Heart right ventricle (tissue), 16 donors: ENCODE measurements at regions of chr3 and their contacts with region 1.

Region 1: GRCh38 chr3:177359593-177360357 is 162.5 kb upstream of the TBL1XR1 start:
- DNase-seq: peak; percentile 96
- ATAC-seq: peak; percentile 89 to 95 (median 93)
- H3K4me3 ChIP-seq: peak overlapping the region in 8 of 10 donors; percentile 14 to 51 (median 46)
- H3K27ac ChIP-seq: peak overlapping the region; percentile 64 to 97 (median 91)
- H3K4me1 ChIP-seq: peaks cover 34 to 77% (median 59%) of the 10 kb centered on the region in 9 donors
- H3K27me3 ChIP-seq: no peaks in the 10 kb centered on the region
- CTCF ChIP-seq: peak in 2 of 9 donors; percentile 19 to 31

Region 2: GRCh38 chr3:177057768-177058167 is 302.0 kb before region 1 on chr3:
- intact Hi-C with region 1: loop called in 7 of 10 experiments (anchors 5 to 10 kb)
- DNase-seq: no peak
- ATAC-seq: no peak
- H3K4me3 ChIP-seq: no peak overlapping the region
- H3K27ac ChIP-seq: no peak overlapping the region
- H3K4me1 ChIP-seq: peaks cover 0 to 70% (median 43%) of the 10 kb centered on the region in 9 donors
- H3K27me3 ChIP-seq: no peaks in the 10 kb centered on the region
- CTCF ChIP-seq: no peak

Region 3: GRCh38 chr3:177345049-177345972 is 14.5 kb before region 1 on chr3:
- intact Hi-C with region 1: loop called in 3 of 10 experiments (anchors 1 to 2 kb)
- DNase-seq: peak; percentile 79 to 90
- ATAC-seq: peak; percentile 93 to 99 (median 98)
- H3K4me3 ChIP-seq: peak overlapping the region in 1 of 10 donors; percentile 5
- H3K27ac ChIP-seq: peak overlapping the region; percentile 86 to 96 (median 90)
- H3K4me1 ChIP-seq: peaks cover 14 to 70% (median 55%) of the 10 kb centered on the region in 9 donors
- H3K27me3 ChIP-seq: no peaks in the 10 kb centered on the region
- CTCF ChIP-seq: no peak

Region 4: DNA sequence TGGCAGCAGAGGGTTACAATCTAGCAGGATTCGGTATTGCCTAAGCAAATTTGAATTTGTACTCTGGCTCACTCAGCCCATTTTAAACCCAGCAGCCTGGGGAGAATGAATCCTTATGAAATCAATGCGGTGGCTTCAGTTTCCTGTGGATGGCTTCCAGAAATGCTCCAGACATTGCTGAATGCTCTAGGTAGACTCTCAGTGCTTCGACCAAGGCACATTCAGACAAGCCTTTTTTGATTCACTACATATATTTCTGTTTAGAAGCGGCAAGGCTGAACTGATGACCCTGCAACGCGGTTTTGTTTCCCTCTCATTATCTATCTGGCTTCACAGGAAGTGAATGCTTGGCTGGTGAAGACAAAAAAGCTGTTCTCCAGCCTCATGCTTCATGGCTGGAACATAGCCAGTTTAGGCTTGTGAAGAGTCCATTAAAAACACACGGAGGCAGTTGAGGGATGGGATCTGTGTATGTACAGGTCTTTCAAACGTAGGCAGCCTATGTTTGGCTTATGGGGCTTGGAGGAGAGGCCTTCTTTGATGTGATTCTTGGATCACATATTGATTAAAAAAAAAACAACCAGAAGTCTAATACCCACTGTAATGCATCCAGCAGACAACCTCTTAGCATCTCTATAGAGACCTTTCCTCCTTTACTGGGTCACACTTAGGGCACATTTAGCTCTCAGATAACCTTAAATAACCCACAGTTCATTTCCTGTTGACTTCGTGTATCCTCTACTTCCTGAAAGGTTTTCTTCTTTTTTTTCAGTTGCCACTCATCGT is 237.7 kb after region 1 on chr3:
- intact Hi-C with region 1: loop called in 1 of 10 experiments (anchors 5 kb)
- DNase-seq: peak in 1 of 2 donors; percentile 60
- ATAC-seq: peak; percentile 78 to 84 (median 79)
- H3K4me3 ChIP-seq: no peak overlapping the region
- H3K27ac ChIP-seq: peak overlapping the region in 9 of 10 donors; percentile 29 to 86 (median 59)
- H3K4me1 ChIP-seq: peaks cover 7 to 80% (median 37%) of the 10 kb centered on the region in 9 donors
- H3K27me3 ChIP-seq: no peaks in the 10 kb centered on the region
- CTCF ChIP-seq: no peak

Region 5: GRCh38 chr3:177652556-177653291 is 292.9 kb after region 1 on chr3:
- intact Hi-C with region 1: no loop called
- DNase-seq: no peak
- ATAC-seq: peak in 5 of 8 donors; percentile 39 to 90 (median 53)
- H3K4me3 ChIP-seq: no peak overlapping the region
- H3K27ac ChIP-seq: peak overlapping the region in 1 of 10 donors; percentile 7
- H3K4me1 ChIP-seq: peaks cover 0 to 21% (median 14%) of the 10 kb centered on the region in 9 donors
- H3K27me3 ChIP-seq: no peaks in the 10 kb centered on the region
- CTCF ChIP-seq: no peak

Region 6: GRCh38 chr3:177810162-177810623 is 450.4 kb after region 1 on chr3:
- intact Hi-C with region 1: loop called in 4 of 10 experiments (anchors 5 to 10 kb)
- DNase-seq: no peak
- ATAC-seq: peak in 5 of 8 donors; percentile 17 to 54 (median 50)
- H3K4me3 ChIP-seq: no peak overlapping the region
- H3K27ac ChIP-seq: peak overlapping the region in 5 of 10 donors; percentile 4 to 46 (median 21)
- H3K4me1 ChIP-seq: peaks cover 0 to 38% (median 26%) of the 10 kb centered on the region in 9 donors
- H3K27me3 ChIP-seq: no peaks in the 10 kb centered on the region
- CTCF ChIP-seq: no peak

Region 7: GRCh38 chr3:178385280-178385952 is 1025.6 kb after region 1 on chr3:
- intact Hi-C with region 1: loop called in 3 of 10 experiments (anchors 10 kb)
- DNase-seq: no peak
- ATAC-seq: peak in 6 of 8 donors; percentile 52 to 74 (median 62)
- H3K4me3 ChIP-seq: peak overlapping the region in 2 of 10 donors; percentile 2 to 28
- H3K27ac ChIP-seq: peak overlapping the region in 6 of 10 donors; percentile 25 to 78 (median 69)
- H3K4me1 ChIP-seq: peaks cover 7 to 41% (median 30%) of the 10 kb centered on the region in 9 donors
- H3K27me3 ChIP-seq: no peaks in the 10 kb centered on the region
- CTCF ChIP-seq: peak; percentile 66 to 92 (median 86)